ENCODE measurements at regions of chr18 and their contacts with region 1.

Region 1: GRCh38 chr18:12883684-12884405 is at the start of gene PTPN2:
- DNase-seq: peak; percentile 95 to 96 (median 96)
- H3K4me3 ChIP-seq: peak within 1 kb of the TSS; percentile 69 to 96 (median 83)
- H3K4me3 Mint-ChIP-seq: peak within 1 kb of the TSS; percentile 90 to 94
- H3K27ac ChIP-seq: peak within 1 kb of the TSS; percentile 97 to 98
- H3K27ac Mint-ChIP-seq: peak within 1 kb of the TSS; percentile 92 to 97 (median 96)
- H3K4me1 ChIP-seq: peaks cover 58 to 62% of the 10 kb centered on the region in 2 donors
- H3K4me1 Mint-ChIP-seq: peaks cover 63% of the 10 kb centered on the region
- H3K27me3 ChIP-seq: no peaks in the 10 kb centered on the region
- H3K27me3 Mint-ChIP-seq: no peaks in the 10 kb centered on the region
- CTCF ChIP-seq: no peak
- polyA plus RNA-seq, gene PTPN2: 55.6 to 108 (median 78.4) TPM

Region 2: DNA sequence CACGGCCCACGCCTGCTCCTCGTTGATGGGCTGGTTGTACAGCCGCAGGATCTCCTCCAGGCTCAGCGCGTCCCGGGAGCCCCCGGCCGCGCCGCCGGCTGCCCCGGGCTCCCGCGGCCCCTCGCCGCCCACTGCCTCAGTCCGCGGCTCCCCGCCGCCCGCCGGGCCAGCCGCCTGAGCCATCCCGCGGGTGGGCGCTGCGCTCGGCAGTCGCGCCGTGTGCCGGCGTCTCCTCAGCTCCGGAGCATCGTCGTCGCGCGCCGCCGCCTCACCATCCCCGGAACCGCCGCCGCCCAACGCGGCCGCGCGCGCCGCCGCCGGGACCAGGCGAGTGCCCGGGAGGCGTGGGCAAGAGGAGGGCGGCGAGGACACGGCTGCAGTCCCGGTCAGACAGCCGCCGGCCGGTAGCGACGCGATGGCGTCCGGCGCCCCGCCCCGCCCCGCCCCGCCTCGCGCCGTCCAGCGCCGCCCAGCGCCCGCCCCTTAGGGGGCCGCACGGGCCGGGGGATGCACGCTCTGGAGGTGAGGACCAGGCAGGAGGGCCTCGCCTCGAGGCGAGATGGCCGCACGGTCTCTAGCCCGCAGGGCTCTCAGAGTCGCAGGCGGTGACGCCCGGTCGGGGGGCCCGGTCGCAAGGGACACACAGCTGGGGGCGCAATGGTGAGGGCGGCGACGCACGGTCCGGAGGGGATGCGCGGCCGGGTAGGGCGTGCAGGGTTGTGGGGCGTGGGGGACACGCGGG is 226.0 kb before region 1 on chr18 and contains the start of gene SPIRE1:
- intact Hi-C with region 1: no loop called
- DNase-seq: peak; percentile 38 to 47 (median 38)
- H3K4me3 ChIP-seq: peak within 1 kb of the TSS; percentile 46 to 84 (median 82)
- H3K4me3 Mint-ChIP-seq: peak within 1 kb of the TSS; percentile 83 to 91
- H3K27ac ChIP-seq: peak within 1 kb of the TSS in 1 of 2 donors; percentile 48
- H3K27ac Mint-ChIP-seq: peak within 1 kb of the TSS in 1 of 7 donors; percentile 41
- H3K4me1 ChIP-seq: peaks cover 11 to 19% of the 10 kb centered on the region in 2 donors
- H3K4me1 Mint-ChIP-seq: peaks cover 19% of the 10 kb centered on the region
- H3K27me3 ChIP-seq: peaks cover 7 to 21% of the 10 kb centered on the region in 2 donors
- H3K27me3 Mint-ChIP-seq: peaks cover 13 to 33% (median 23%) of the 10 kb centered on the region in 3 donors
- CTCF ChIP-seq: no peak
- polyA plus RNA-seq, gene SPIRE1: 1.7 to 1.9 (median 1.8) TPM

Region 3: GRCh38 chr18:12838178-12838634 is 45.6 kb before region 1 on chr18:
- intact Hi-C with region 1: loop called (anchors 2 to 5 kb)
- DNase-seq: peak; percentile 42 to 86 (median 84)
- H3K4me3 ChIP-seq: peak overlapping the region; percentile 19 to 74 (median 57)
- H3K4me3 Mint-ChIP-seq: peak overlapping the region; percentile 24 to 83
- H3K27ac ChIP-seq: peak overlapping the region; percentile 95 to 97
- H3K27ac Mint-ChIP-seq: peak overlapping the region; percentile 96 to 98 (median 97)
- H3K4me1 ChIP-seq: peaks cover 42 to 52% of the 10 kb centered on the region in 2 donors
- H3K4me1 Mint-ChIP-seq: peaks cover 52% of the 10 kb centered on the region
- H3K27me3 ChIP-seq: no peaks in the 10 kb centered on the region
- H3K27me3 Mint-ChIP-seq: no peaks in the 10 kb centered on the region
- CTCF ChIP-seq: no peak